ENCODE measurements at regions of chr15 and their contacts with region 1.

Region 1: DNA sequence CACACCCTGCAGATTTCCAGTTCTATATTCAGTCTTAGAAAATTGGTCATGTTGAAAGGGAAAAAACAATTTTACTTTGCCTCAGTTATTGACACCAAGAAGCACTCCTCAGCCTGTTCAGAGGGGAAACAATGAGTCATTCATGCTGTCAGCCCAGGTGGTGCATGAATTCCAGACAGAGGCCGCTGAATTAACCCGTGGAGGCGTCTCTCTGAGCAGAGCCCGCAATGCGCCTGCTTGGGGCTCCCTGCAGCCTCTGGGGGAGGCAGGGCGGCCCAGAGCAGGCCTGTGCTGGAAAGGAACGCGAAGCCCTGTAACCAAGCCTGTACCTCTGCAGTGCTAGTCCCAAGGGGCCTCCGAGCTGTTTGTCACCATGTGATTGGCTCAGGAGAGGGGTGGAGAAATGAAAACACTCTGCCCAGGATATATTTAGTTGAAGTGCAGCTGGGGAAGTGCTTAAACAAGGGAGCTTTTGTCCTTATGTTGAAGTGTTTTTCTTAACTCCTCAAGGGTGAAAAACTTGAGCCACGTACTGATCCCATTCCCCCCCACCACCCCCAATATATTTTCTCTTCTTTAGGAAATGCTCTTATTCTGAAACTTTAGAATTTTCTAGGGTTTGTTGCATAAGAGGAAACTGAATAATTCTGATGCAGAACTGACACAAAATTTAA is 68.3 kb upstream of the CHD2 start:
- DNase-seq: peak; percentile 85
- ATAC-seq: peak; percentile 99
- H3K4me3 Mint-ChIP-seq: peak overlapping the region; percentile 67
- H3K27ac Mint-ChIP-seq: peak overlapping the region; percentile 92
- H3K4me1 Mint-ChIP-seq: peaks cover 34% of the 10 kb centered on the region
- H3K27me3 Mint-ChIP-seq: no peaks in the 10 kb centered on the region

Region 2: DNA sequence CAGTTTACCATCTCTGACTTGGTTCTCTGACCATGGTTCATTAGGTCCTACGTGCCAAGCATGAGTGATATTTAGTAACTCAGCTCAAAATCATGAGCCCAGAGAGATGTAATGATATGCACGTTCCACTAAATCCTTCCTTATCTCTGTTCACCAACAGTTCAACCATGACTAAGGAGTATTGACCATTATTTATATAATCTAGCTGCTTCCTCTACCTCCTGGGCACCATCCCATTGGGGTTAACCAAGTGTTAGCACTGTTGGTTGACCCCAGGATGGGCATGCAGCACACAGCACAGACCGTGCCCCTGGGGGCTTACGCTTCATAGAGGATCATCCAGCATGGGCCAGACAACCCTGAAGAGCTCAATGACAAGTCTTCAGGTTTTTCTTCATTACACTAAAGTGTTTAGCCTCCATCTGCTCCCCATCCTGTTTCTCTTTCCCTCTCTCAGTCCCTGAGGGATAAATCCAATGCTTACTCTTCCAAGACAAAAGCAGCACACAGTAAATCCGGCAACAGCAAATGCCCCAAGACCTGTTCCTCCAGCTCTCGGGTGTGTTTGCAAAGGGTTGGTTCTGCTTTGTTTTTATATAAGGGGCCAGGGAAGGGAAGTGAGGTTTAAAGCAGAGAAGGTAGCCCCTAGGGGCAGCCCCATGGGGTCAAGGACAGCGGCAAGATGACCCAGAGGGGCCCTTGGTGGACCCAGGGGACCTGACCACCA is 186.6 kb before region 1 on chr15:
- POLR2A ChIA-PET with region 1: no interaction called
- DNase-seq: no peak
- ATAC-seq: no peak
- H3K4me3 Mint-ChIP-seq: no peak overlapping the region
- H3K27ac Mint-ChIP-seq: no peak overlapping the region
- H3K4me1 Mint-ChIP-seq: no peaks in the 10 kb centered on the region
- H3K27me3 Mint-ChIP-seq: peaks cover 7% of the 10 kb centered on the region

Region 3: DNA sequence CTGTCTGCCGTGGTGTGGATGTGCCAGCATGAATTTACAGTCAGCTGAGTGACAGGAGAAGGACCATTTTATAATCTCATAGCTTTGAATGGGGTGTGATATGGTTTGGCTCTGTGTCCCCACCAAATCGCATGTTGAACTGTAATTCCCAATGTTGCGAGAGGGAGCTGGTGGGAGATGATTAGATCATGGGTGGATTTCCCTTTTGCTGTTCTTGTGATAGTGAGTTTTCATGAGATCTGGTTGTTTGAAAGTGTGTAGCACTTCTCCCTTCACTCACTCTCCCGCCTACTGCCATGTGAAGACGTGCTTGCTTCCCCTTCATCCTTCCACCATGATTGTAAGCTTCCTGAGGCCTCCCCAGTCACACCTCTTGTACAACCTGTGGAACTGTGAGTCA is 43.6 kb before region 1 on chr15:
- POLR2A ChIA-PET with region 1: no interaction called
- DNase-seq: no peak
- ATAC-seq: no peak
- H3K4me3 Mint-ChIP-seq: no peak overlapping the region
- H3K27ac Mint-ChIP-seq: no peak overlapping the region
- H3K4me1 Mint-ChIP-seq: no peaks in the 10 kb centered on the region
- H3K27me3 Mint-ChIP-seq: no peaks in the 10 kb centered on the region

Region 4: DNA sequence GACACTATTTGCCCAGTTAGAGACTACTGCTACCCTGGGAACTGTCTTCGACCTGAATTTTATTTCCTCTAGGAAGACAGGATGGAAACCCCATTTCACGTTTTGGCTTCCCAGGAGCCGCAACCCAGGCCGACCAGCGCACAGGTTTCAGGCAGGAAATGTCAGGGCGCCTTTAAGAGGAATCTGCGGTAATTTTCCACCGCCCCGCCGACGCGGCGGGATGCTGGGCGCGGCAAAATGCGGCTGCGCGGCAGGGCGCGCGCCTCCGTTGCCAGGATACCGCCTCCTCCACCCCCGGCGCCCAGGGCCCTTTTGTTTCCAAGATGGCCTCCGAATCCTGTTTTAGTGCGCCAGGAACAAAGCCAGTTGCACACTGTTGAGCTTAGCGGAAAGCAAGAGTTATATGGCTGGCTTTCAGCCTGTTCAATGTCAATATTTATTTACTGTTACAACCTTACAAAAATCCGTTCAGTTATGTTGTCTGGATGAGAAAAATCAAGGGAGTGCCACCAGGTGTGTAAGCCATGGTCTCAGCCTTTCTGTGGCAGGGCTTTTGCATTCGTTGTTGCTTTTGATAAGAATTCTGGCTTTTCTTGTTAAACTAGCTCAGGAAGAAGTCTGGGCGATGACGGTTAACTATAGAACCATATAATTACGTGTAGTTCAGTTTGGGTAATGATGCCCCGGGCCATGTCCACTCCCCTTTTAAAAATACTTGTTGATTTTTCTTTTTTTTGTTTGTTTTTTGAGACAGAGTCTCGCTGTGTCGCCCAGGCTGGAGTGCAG is 11.4 kb before region 1 on chr15:
- POLR2A ChIA-PET with region 1: interaction called, 82 read pairs
- DNase-seq: peak; percentile 86
- ATAC-seq: peak; percentile 82
- H3K4me3 Mint-ChIP-seq: peak overlapping the region; percentile 87
- H3K27ac Mint-ChIP-seq: peak overlapping the region; percentile 83
- H3K4me1 Mint-ChIP-seq: peaks cover 47% of the 10 kb centered on the region
- H3K27me3 Mint-ChIP-seq: no peaks in the 10 kb centered on the region

Region 5: DNA sequence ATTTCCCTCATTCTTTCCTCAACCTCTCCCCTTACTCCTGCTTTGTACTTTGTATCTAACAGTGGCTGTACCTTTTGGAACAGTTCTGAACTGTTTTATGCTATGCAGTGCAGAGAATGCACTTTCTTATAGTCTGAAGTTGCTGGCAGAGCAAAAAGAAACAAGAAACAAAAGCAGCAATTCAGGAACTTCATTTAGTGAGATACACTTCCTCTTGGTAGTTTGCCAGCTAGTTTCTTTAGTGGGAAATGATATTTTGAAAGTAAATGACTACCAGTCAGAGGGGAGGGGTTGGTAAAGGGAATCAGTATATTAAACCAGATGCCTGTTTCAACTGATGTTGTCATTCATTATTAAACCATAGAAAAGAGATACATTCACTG is 13.3 kb after region 1 on chr15:
- POLR2A ChIA-PET with region 1: interaction called, 25 read pairs
- DNase-seq: no peak
- ATAC-seq: peak; percentile 6
- H3K4me3 Mint-ChIP-seq: peak overlapping the region; percentile 81
- H3K27ac Mint-ChIP-seq: peak overlapping the region; percentile 95
- H3K4me1 Mint-ChIP-seq: peaks cover 50% of the 10 kb centered on the region
- H3K27me3 Mint-ChIP-seq: no peaks in the 10 kb centered on the region

Region 6: GRCh38 chr15:92903941-92904831 is 72.4 kb after region 1 on chr15:
- POLR2A ChIA-PET with region 1: interaction called, 40 read pairs
- DNase-seq: peak; percentile 100
- ATAC-seq: peak; percentile 88
- H3K4me3 Mint-ChIP-seq: peak overlapping the region; percentile 99
- H3K27ac Mint-ChIP-seq: peak overlapping the region; percentile 100
- H3K4me1 Mint-ChIP-seq: peaks cover 52% of the 10 kb centered on the region
- H3K27me3 Mint-ChIP-seq: no peaks in the 10 kb centered on the region

Region 7: GRCh38 chr15:92917606-92918407 is 86.0 kb after region 1 on chr15:
- POLR2A ChIA-PET with region 1: interaction called, 14 read pairs
- DNase-seq: peak; percentile 86
- ATAC-seq: peak; percentile 28
- H3K4me3 Mint-ChIP-seq: peak overlapping the region; percentile 62
- H3K27ac Mint-ChIP-seq: peak overlapping the region; percentile 78
- H3K4me1 Mint-ChIP-seq: peaks cover 73% of the 10 kb centered on the region
- H3K27me3 Mint-ChIP-seq: no peaks in the 10 kb centered on the region

Region 8: DNA sequence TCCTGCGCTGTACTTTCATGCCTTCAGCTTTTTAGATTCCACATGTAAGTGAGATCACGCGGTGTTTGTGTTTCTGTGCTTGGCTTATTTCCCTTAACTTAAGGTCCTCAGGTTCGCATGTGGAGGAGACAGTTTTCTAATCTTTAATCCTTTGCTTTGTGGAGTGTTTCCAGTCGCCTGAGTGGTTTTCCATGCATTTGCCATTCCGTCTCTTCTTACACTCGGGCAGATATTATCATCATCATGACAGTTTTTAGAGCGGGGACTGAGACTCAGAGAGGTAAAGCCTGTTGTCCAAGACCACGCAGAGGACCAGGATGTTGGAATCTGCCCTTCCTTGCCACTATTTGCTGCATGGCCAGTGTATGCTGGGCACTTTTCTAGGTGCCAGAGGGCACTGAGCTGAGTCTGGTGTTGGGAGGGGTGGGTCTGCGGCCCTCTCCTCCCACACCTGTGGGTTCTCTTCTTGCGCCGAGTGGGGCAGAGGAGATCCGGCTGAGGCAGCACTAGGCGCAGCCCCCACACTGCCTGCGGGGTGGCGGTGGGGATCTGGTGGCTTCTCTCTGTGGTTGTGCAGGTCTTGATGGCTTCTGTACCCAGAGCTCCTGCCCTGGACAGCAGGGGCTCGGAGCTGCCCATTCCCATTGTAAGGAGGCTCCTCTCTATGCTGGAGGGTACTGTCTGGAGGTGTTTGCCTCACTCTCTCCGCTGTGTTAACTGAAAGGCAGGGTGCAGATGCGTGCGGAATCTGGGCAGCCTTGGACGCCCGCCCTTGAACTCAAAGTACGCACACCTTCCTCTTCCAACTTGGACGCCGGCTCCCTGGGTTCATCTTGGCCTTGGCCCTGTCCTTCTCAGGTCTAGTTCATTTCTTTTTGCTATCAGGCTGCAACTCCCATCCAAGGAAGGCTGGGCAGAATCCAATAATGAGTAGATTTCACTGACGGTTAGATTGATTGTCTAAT is 413.2 kb after region 1 on chr15:
- POLR2A ChIA-PET with region 1: no interaction called
- DNase-seq: no peak
- ATAC-seq: no peak
- H3K4me3 Mint-ChIP-seq: no peak overlapping the region
- H3K27ac Mint-ChIP-seq: no peak overlapping the region
- H3K4me1 Mint-ChIP-seq: peaks cover 3% of the 10 kb centered on the region
- H3K27me3 Mint-ChIP-seq: peaks cover 3% of the 10 kb centered on the region

Measured in activated naive CD8-positive, alpha-beta T cell treated with anti-CD3 and anti-CD28 coated beads, Interleukin-2, amount 10 ng/mL, durations not matched to agents 7 days and 5 days (primary cell).